ENCODE measurements at regions of chr3 and their contacts with region 1.

Region 1: DNA sequence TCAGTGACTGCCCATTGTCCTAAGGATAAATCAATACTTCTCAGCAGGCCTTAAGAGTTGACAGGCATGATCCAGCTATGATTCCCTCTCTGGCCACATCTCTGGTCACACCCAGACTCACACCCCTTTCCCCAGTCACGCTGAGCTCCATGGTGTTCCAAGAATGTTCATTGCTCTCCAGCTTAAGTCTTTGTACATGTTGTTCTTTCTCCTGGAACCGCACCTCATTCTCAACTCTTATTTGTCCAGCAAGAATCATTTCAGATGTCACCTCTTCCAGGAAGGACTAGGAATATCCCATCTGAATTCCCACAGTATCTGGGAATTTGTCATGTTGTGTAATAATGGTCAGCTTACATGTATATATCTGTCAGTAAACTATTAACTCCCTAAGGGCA is 118.3 kb upstream of the GALNT15 start:
- DNase-seq: no peak
- H3K4me3 ChIP-seq: no peak overlapping the region
- H3K27ac ChIP-seq: peak overlapping the region; percentile 79
- H3K4me1 ChIP-seq: peaks cover 30% of the 10 kb centered on the region
- H3K27me3 ChIP-seq: no peaks in the 10 kb centered on the region
- CTCF ChIP-seq: no peak
- POLR2A ChIP-seq: no peak

Region 2: GRCh38 chr3:15831930-15832329 is 224.3 kb before region 1 on chr3:
- intact Hi-C with region 1: no loop called
- DNase-seq: no peak
- H3K4me3 ChIP-seq: no peak overlapping the region
- H3K27ac ChIP-seq: no peak overlapping the region
- H3K4me1 ChIP-seq: no peaks in the 10 kb centered on the region
- H3K27me3 ChIP-seq: no peaks in the 10 kb centered on the region
- CTCF ChIP-seq: no peak
- POLR2A ChIP-seq: no peak

Region 3: GRCh38 chr3:15998907-15999306 is 57.3 kb before region 1 on chr3:
- intact Hi-C with region 1: no loop called
- DNase-seq: no peak
- H3K4me3 ChIP-seq: no peak overlapping the region
- H3K27ac ChIP-seq: no peak overlapping the region
- H3K4me1 ChIP-seq: no peaks in the 10 kb centered on the region
- H3K27me3 ChIP-seq: no peaks in the 10 kb centered on the region
- CTCF ChIP-seq: no peak
- POLR2A ChIP-seq: no peak

Region 4: GRCh38 chr3:16130066-16130465 is 73.9 kb after region 1 on chr3:
- intact Hi-C with region 1: loop called (anchors 5 kb)
- DNase-seq: no peak
- H3K4me3 ChIP-seq: no peak overlapping the region
- H3K27ac ChIP-seq: no peak overlapping the region
- H3K4me1 ChIP-seq: peaks cover 16% of the 10 kb centered on the region
- H3K27me3 ChIP-seq: no peaks in the 10 kb centered on the region
- CTCF ChIP-seq: no peak
- POLR2A ChIP-seq: no peak

Measured in vagina (tissue), 2 donors.